Dorsolateral prefrontal cortex (tissue), 120 donors: ENCODE measurements at regions of chr9 and their contacts with region 1.

Region 1: GRCh38 chr9:107489687-107490605 is at the start of gene KLF4:
- DNase-seq: peak; percentile 33 to 88 (median 79)
- H3K4me3 ChIP-seq: peak within 1 kb of the TSS; percentile 44 to 89 (median 70)
- H3K27ac ChIP-seq: peak within 1 kb of the TSS in 50 of 59 donors; percentile 4 to 92 (median 72)
- H3K27me3 ChIP-seq: peaks cover 0 to 20% (median 0%) of the 10 kb centered on the region in 45 donors
- CTCF ChIP-seq: peak in 6 of 56 donors; percentile 7 to 37 (median 17)
- total RNA-seq, gene KLF4: 1.7 to 32.7 (median 8.3) TPM

Region 2: DNA sequence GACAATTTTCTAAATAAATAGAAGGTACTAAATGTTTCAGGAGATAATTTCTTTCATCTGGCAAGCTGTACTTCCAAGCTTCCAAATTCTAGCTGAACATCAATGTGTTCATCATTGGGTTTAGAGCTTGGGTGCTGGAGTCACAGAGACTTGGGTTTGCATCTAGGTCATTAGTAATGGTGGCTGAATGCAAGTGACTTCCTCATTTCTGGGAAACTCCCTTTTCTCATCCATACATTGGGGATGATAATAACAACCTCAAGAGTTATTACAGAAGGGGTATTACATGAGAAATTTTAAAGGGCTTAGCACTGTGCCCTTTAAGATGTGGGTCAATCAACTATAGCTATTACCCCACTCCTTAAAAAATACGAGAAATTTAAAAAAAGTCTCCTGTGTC is 40.7 kb after region 1 on chr9:
- intact Hi-C with region 1: no loop called
- DNase-seq: no peak
- H3K4me3 ChIP-seq: no peak overlapping the region
- H3K27ac ChIP-seq: no peak overlapping the region
- H3K27me3 ChIP-seq: peaks cover 0 to 3% (median 0%) of the 10 kb centered on the region in 45 donors
- CTCF ChIP-seq: no peak

Region 3: DNA sequence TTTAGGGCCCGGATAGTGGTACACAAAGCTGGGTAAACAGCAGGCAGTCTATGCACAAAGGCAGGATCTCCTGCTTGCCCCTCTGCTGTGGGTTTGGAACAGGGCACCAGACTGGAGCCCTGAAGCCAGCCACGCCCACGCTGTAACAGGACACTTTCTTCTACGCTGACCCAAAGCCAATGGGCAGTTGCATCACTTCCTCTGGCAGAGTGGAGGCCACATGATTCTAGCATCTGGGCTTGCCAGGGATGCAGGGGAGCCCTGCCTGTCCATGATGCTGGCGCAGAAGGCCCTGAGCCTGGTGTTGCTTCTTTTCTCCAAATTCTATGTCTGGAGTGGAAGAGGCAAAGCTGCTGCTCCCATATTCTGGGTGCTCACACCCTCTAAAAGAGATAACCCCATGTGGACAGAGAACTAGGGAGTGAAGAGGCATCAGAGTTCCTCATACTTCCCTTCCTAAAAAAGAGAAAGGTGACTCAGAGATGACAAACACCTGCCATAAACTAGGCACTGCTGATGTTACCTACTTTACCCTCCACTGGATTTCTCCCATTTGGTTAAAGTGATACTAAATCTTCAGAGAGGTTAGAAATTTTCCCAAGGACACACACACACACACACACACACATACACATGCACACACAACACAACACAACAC is 260.0 kb after region 1 on chr9:
- intact Hi-C with region 1: loop called in 1 of 2 experiments (anchors 1 kb)
- DNase-seq: peak; percentile 18 to 92 (median 87)
- H3K4me3 ChIP-seq: peak overlapping the region in 1 of 59 donors; percentile 21
- H3K27ac ChIP-seq: peak overlapping the region; percentile 77 to 97 (median 90)
- H3K27me3 ChIP-seq: no peaks in the 10 kb centered on the region
- CTCF ChIP-seq: peak in 1 of 56 donors; percentile 11

Region 4: DNA sequence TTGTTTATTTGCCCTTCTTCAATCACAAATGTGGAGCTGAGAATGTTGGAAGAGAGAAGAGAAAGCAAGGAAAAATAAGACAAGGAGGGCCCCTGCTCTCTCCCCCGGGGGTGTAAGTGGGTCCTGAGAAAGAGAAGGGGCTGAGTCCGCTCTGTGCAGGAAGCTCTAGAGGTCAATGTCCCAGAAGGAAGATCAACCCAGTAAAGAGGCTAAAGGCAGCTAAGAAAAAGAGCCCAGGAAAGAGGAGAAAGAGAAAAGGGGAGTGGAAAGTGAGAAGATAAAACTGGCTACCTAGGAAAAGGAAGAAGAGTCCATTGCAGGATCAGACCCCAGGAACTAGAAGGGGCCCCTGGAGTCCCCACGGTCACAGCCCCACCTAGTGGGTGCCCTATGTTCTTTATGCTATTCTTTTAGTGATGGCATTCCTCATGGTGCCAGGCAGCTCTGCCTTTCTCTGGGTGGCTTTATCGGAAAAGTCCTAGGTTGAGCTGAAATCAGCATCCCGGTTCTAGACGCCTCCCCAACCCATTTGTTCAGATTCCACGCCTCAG is 782.5 kb after region 1 on chr9:
- intact Hi-C with region 1: loop called in 1 of 2 experiments (anchors 5 kb)
- DNase-seq: peak in 9 of 10 donors; percentile 4 to 59 (median 42)
- H3K4me3 ChIP-seq: peak overlapping the region in 32 of 59 donors; percentile 1 to 43 (median 22)
- H3K27ac ChIP-seq: peak overlapping the region in 9 of 59 donors; percentile 6 to 49 (median 25)
- H3K27me3 ChIP-seq: no peaks in the 10 kb centered on the region
- CTCF ChIP-seq: peak; percentile 35 to 83 (median 66)

Region 5: GRCh38 chr9:108444400-108445358 is 954.7 kb after region 1 on chr9:
- intact Hi-C with region 1: loop called (anchors 10 kb)
- DNase-seq: no peak
- H3K4me3 ChIP-seq: no peak overlapping the region
- H3K27ac ChIP-seq: peak overlapping the region in 28 of 59 donors; percentile 5 to 89 (median 70)
- H3K27me3 ChIP-seq: no peaks in the 10 kb centered on the region
- CTCF ChIP-seq: no peak